ENCODE measurements at regions of chr9 and their contacts with region 1.

Region 1: GRCh38 chr9:131349881-131350563 is 43.9 kb upstream of the PRRC2B start:
- DNase-seq: peak; percentile 95
- ATAC-seq: peak; percentile 99
- H3K4me3 Mint-ChIP-seq: peak overlapping the region; percentile 38
- H3K27ac Mint-ChIP-seq: peak overlapping the region; percentile 69
- H3K4me1 Mint-ChIP-seq: peaks cover 7% of the 10 kb centered on the region
- H3K27me3 Mint-ChIP-seq: no peaks in the 10 kb centered on the region
- CTCF ChIP-seq: peak; percentile 81

Region 2: DNA sequence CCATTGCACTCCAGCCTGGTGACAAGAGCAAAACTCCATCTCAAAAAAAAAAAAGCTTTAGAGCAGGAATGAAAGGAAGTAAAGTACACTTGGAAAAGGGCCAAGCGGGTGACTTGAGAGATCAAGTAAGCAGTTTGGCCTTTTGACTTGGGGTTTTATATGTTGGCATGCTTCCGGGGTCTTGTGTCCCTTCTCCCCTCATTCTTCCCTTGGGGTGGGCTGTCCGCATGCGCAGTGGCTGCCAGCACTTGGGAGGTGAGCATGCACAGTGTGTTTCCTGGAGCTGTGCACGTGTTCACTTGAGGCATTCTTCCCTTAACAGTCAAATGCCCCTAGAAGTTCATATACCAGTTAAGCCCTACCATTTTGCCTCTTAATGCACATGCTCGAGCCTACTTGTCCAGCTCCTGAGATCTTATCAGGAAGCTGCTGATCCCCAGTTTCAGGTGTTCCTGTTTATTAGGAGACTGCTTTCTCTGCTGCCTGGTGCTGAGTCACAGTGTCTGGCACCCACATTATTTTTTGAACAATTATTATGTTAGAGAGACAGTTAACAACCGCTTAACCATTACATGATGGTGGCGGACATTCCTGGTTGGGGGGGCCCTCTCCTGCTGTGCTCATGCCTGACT is 11.3 kb after region 1 on chr9:
- CTCF ChIA-PET with region 1: interaction called, 26 read pairs
- POLR2A ChIA-PET with region 1: no interaction called
- intact Hi-C with region 1: no loop called
- DNase-seq: peak; percentile 75
- ATAC-seq: peak; percentile 72
- H3K4me3 Mint-ChIP-seq: peak overlapping the region; percentile 32
- H3K27ac Mint-ChIP-seq: peak overlapping the region; percentile 90
- H3K4me1 Mint-ChIP-seq: peaks cover 24% of the 10 kb centered on the region
- H3K27me3 Mint-ChIP-seq: no peaks in the 10 kb centered on the region
- CTCF ChIP-seq: no peak

Region 3: DNA sequence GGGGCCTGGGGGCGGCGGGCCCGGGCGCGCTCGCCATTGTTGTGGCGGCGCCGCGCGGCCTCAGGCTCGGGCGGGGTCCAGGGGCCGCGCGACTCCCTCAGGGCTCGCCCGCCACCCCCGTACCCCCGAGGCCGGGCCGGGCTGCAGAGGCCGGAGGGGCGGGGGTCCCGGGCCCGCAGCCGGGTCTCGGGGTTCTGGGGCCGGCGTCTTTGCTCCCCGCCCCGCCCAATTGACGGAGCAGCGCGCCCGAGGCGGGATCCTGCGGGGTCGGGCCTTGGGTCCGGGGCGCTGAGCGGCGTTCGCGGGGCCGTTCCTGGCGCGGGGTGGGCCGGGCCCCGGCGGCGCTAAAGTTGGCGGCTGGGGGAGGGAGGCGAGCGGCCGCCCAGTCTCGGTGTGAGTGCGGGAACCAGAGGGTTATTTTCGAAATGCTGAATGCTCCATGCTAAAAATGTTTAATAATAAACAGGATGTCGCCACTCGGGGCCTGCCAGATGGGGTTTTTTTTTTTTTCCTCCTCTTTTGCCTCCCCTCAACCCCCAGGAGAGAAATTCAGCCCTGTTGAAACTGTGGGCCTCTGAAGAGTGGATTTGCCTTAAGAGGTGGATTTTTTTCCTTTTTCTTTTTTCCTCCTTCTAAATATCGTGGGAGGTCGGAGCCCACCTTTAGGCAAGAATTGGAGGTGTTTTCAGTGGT is 44.6 kb after region 1 on chr9:
- CTCF ChIA-PET with region 1: interaction called, 11 read pairs
- POLR2A ChIA-PET with region 1: no interaction called
- intact Hi-C with region 1: no loop called
- DNase-seq: peak; percentile 62
- ATAC-seq: peak; percentile 18
- H3K4me3 Mint-ChIP-seq: peak overlapping the region; percentile 95
- H3K27ac Mint-ChIP-seq: peak overlapping the region; percentile 95
- H3K4me1 Mint-ChIP-seq: peaks cover 45% of the 10 kb centered on the region
- H3K27me3 Mint-ChIP-seq: no peaks in the 10 kb centered on the region
- CTCF ChIP-seq: no peak

Region 4: GRCh38 chr9:131418143-131419028 is 68.4 kb after region 1 on chr9:
- CTCF ChIA-PET with region 1: interaction called, 14 read pairs
- POLR2A ChIA-PET with region 1: interaction called, 4 read pairs
- intact Hi-C with region 1: no loop called
- DNase-seq: no peak
- ATAC-seq: no peak
- H3K4me3 Mint-ChIP-seq: peak overlapping the region; percentile 51
- H3K27ac Mint-ChIP-seq: peak overlapping the region; percentile 90
- H3K4me1 Mint-ChIP-seq: peaks cover 86% of the 10 kb centered on the region
- H3K27me3 Mint-ChIP-seq: no peaks in the 10 kb centered on the region
- CTCF ChIP-seq: no peak

Region 5: DNA sequence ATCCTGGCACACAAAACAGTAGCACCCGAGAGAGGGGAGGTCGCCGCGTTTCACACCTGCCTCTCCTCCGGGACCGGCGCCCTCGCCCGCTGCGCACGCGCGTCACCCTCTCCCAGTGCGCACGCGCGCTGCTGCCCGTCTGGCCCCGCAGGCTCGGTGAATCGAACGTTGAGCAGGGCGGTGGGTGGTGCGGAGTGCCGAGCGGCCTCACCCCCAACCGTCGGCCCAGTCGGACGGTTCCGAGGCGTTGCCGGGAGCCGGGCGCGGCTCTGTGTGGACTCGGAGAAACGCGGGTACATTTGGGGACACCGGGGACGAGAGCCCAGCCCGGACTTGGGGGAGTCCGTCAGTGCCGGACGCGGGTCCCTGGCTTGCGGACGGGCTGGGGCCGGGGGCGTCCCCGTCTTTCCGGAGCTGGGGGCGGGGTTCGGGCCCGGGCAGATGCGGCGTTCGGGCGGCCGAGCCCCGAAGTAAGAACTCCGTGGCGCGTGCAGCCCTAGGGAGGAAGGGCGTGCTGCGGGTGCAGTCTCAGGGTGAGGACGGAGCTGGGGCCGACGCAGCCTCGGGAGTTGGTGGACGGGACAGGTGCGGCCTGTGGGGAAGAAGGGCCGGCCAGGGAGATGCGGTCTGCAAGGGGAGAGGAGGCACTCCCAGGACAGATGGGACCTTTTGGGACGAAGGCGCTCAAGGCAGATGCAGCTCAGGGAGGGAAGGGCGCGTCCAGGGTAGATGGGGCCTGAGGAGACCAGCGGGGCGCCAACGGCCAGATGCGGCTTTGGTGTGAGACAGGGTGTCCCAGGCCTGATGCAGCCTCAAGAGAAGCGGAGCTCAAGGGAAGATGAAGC is 153.0 kb after region 1 on chr9 and contains the start of gene POMT1:
- CTCF ChIA-PET with region 1: interaction called, 13 read pairs
- POLR2A ChIA-PET with region 1: no interaction called
- intact Hi-C with region 1: no loop called
- DNase-seq: peak; percentile 89
- ATAC-seq: peak; percentile 56
- H3K4me3 Mint-ChIP-seq: peak within 1 kb of the TSS; percentile 99
- H3K27ac Mint-ChIP-seq: peak within 1 kb of the TSS; percentile 91
- H3K4me1 Mint-ChIP-seq: peaks cover 57% of the 10 kb centered on the region
- H3K27me3 Mint-ChIP-seq: no peaks in the 10 kb centered on the region
- CTCF ChIP-seq: no peak
- total RNA-seq, gene POMT1: 30.2 to 35.9 TPM

Region 6: GRCh38 chr9:131546336-131547084 is 196.5 kb after region 1 on chr9:
- CTCF ChIA-PET with region 1: no interaction called
- POLR2A ChIA-PET with region 1: no interaction called
- intact Hi-C with region 1: no loop called
- DNase-seq: peak; percentile 24
- ATAC-seq: peak; percentile 34
- H3K4me3 Mint-ChIP-seq: peak overlapping the region; percentile 64
- H3K27ac Mint-ChIP-seq: no peak overlapping the region
- H3K4me1 Mint-ChIP-seq: peaks cover 14% of the 10 kb centered on the region
- H3K27me3 Mint-ChIP-seq: peaks cover 58% of the 10 kb centered on the region
- CTCF ChIP-seq: no peak